SK-N-SH (cell line): ENCODE measurements at regions of chr19 and their contacts with region 1.

Region 1: DNA sequence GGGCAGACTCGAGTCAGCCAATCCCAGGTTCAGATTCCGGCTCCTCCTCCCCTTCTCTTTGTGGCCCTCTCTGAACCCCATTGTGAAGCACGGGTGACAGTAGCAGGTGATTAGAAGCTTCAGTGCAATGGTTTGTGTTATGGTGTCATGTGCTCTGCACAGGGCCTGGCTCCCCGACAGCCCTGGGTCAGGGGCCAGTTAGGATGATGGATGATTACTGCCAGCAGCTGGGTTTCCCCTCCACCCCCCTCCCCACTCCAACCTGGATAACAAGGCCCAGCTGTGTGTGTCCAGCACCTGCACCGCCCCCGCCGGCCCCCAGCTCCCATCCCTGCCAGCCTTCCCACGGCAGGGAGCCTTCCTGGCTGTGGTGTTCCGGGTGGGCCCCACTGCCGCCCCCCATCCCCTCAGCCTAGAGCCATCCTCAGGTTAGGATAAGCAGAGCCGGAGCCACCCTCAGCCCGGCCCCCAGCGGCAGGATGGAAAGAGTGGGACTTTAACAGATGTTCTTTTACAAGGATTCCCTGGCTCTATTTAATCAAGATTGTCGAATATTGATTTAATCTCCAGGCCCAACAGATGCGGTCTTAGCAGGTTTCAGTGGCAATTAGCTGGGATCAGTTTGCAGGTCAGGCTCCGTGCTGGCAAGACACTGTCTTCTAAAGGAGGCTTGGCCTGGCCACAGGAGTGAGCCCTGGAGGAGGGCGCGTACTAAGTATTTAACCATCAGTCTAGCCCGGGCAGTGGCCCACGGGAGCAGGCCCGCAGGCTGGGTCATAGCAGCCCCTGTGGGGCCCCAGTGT is 156.2 kb downstream of the SIPA1L3 start:
- DNase-seq: peak; percentile 87
- H3K4me3 ChIP-seq: no peak overlapping the region
- H3K27ac ChIP-seq: peak overlapping the region in 1 of 2 experiments; percentile 67; a peak in 2 of 4 replicates
- H3K4me1 ChIP-seq: peaks cover 0 to 33% of the 10 kb centered on the region in 2 experiments; a peak in 1 of 4 replicates
- H3K27me3 ChIP-seq: no peaks in the 10 kb centered on the region
- CTCF ChIP-seq: no peak
- EP300 ChIP-seq: peak in 1 of 2 experiments; percentile 82; a peak in 2 of 4 replicates
- RAD21 ChIP-seq: peak; percentile 30

Region 2: DNA sequence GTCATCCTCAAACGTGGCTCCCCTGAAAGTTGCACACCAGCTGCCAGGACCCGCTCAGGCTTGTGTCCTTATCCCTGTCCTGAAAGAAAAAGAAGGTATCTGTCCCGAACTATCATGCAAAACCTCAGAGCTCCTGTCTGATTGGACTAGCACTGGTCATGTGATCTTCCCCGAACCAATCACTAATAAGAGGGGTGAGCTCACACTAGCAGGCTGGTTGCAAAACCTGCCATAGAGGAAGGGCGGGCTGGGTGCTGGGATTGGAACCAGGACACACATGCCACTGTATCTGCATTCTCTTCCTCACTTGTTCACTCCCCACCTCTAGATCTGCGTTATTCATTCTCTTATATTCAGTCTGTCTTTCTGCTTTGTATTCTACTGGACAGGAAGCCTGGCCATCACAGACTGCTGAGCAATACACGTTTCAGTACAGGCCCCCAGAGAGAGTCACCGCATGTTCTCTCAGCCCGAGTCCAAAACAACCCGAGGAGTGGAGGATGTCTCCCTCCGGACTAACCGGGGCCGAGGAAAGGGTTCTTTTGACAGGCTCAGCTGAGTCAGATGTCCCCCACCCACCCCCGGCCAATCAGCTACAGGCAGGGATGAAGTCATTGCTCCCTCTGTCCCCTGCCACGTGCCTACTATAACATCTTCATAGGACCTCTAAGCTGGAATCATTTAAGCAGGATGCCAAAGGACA is 58.5 kb before region 1 on chr19:
- CTCF ChIA-PET with region 1: interaction called, 4 read pairs
- POLR2A ChIA-PET with region 1: interaction called, 20 read pairs
- DNase-seq: peak; percentile 89
- H3K4me3 ChIP-seq: peak overlapping the region; percentile 46 to 57
- H3K27ac ChIP-seq: peak overlapping the region; percentile 98 to 100
- H3K4me1 ChIP-seq: peaks cover 25 to 32% of the 10 kb centered on the region in 2 experiments
- H3K27me3 ChIP-seq: no peaks in the 10 kb centered on the region
- CTCF ChIP-seq: no peak
- EP300 ChIP-seq: no peak
- RAD21 ChIP-seq: no peak

Region 3: GRCh38 chr19:38089440-38089839 is 26.3 kb after region 1 on chr19:
- CTCF ChIA-PET with region 1: interaction called, 12 read pairs
- POLR2A ChIA-PET with region 1: interaction called, 5 read pairs
- DNase-seq: no peak
- H3K4me3 ChIP-seq: no peak overlapping the region
- H3K27ac ChIP-seq: no peak overlapping the region
- H3K4me1 ChIP-seq: peaks cover 0 to 24% of the 10 kb centered on the region in 2 experiments; a peak in 1 of 4 replicates
- H3K27me3 ChIP-seq: no peaks in the 10 kb centered on the region
- CTCF ChIP-seq: no peak
- EP300 ChIP-seq: no peak
- RAD21 ChIP-seq: no peak